ENCODE measurements at regions of chr7 and their contacts with region 1.

Region 1: DNA sequence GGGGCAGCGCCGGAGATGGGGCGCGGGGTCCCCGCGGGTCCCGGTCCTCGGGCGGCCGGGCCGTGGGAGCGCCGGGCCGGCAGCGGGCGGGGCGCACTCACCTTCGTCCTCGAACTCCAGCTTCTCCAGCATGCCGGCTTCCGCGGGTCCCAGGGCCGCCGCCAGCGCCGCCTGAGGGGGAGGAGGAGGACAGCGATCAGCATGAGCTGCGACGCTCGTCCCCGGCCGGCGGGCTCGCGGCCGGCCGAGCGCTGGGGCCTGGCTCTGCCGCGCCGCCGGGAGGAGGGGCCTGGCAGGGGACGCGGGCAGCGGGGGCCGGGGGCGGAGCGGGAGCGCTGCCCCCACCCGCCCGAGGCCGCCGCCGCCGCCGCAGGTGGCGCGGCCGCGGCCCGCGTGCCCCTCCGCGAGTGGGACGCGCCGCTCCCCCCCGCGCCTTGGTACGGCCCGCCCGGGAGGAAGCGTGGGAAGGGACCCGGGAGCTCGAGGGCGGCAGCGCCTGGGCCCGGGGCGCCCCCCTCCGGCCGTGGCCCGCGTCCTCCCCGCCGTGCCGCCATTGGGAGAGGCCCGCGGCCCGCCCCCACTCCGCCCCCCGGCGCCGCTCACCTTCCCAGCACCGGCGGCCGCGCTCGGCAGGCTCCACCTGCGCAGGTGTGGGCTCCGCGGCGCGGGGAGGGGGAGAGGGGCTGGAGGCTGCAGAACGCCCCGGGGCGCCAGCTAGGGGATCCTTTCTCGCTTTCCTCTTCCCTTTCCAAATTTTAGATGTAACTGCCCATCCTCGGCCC is 112.5 kb upstream of the RHEB start:
- DNase-seq: peak; percentile 88
- ATAC-seq: peak; percentile 87

Region 2: GRCh38 chr7:151671514-151671913 is 39.4 kb after region 1 on chr7:
- intact Hi-C with region 1: loop called (anchors 5 kb)
- DNase-seq: no peak
- ATAC-seq: peak; percentile 23

Region 3: GRCh38 chr7:151711906-151712809 is 80.0 kb after region 1 on chr7:
- intact Hi-C with region 1: no loop called
- DNase-seq: peak; percentile 73
- ATAC-seq: peak; percentile 38

Region 4: GRCh38 chr7:151727579-151728285 is 95.6 kb after region 1 on chr7:
- intact Hi-C with region 1: loop called (anchors 10 kb)
- DNase-seq: peak; percentile 84
- ATAC-seq: peak; percentile 74

Measured in Right ventricle myocardium inferior (tissue), 1 donor.